Activated CD4-positive, alpha-beta T cell treated with anti-CD3 and anti-CD28 coated beads, Interleukin-2, amount 10 ng/mL, durations not matched to agents 7 days and 5 days (primary cell): ENCODE measurements at regions of chr10 and their contacts with region 1.

Region 1: GRCh38 chr10:103759100-103759781 is 96.1 kb downstream of the SH3PXD2A start:
- DNase-seq: peak; percentile 35
- H3K4me3 Mint-ChIP-seq: no peak overlapping the region
- H3K27ac Mint-ChIP-seq: peak overlapping the region; percentile 78
- H3K4me1 Mint-ChIP-seq: peaks cover 70% of the 10 kb centered on the region
- H3K27me3 Mint-ChIP-seq: peaks cover 24% of the 10 kb centered on the region

Region 2: GRCh38 chr10:103745341-103746227 is 13.7 kb before region 1 on chr10:
- CTCF ChIA-PET with region 1: interaction called, 71 read pairs
- POLR2A ChIA-PET with region 1: interaction called, 6 read pairs
- DNase-seq: peak; percentile 53
- H3K4me3 Mint-ChIP-seq: no peak overlapping the region
- H3K27ac Mint-ChIP-seq: peak overlapping the region; percentile 88
- H3K4me1 Mint-ChIP-seq: peaks cover 50% of the 10 kb centered on the region
- H3K27me3 Mint-ChIP-seq: no peaks in the 10 kb centered on the region

Region 3: DNA sequence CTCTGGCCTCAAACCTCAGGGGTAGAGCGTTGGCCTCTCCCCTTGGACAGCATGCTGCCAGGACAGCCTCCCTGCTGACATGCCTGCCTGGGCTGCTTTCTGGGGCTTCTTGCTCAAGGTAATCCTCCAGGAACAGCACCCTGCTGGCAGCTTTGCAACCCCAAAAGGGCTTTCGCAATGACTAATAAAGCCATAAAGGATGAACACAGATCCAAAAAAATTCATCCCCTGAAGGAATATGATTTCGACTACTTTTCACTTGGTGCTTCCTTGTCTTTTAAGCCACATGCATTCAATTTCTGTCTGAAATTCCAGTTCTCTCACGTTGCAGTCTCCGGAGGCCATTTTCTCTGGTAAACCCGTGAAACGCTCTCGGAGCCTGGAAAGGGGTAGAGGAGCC is 111.3 kb after region 1 on chr10:
- CTCF ChIA-PET with region 1: no interaction called
- POLR2A ChIA-PET with region 1: no interaction called
- DNase-seq: no peak
- H3K4me3 Mint-ChIP-seq: no peak overlapping the region
- H3K27ac Mint-ChIP-seq: no peak overlapping the region
- H3K4me1 Mint-ChIP-seq: no peaks in the 10 kb centered on the region
- H3K27me3 Mint-ChIP-seq: no peaks in the 10 kb centered on the region